Panc1 (cell line): ENCODE measurements at regions of chr11 and their contacts with region 1.

Region 1: GRCh38 chr11:60265373-60266214 is 14.9 kb upstream of the MS4A4A start:
- DNase-seq: peak; percentile 10
- ATAC-seq: 0 out of 2 replicates have a peak, but pooled peaks have one; percentile 60
- H3K4me3 ChIP-seq: no peak overlapping the region
- H3K27ac ChIP-seq: no peak overlapping the region
- H3K4me1 ChIP-seq: no peaks in the 10 kb centered on the region
- H3K27me3 ChIP-seq: no peaks in the 10 kb centered on the region; the same call in 1 of the 2 replicates
- CTCF ChIP-seq: peak; percentile 71

Region 2: GRCh38 chr11:60345489-60345888 is 79.9 kb after region 1 on chr11:
- CTCF ChIA-PET with region 1: no interaction called
- POLR2A ChIA-PET with region 1: no interaction called
- in situ Hi-C with region 1: no loop called
- intact Hi-C with region 1: loop called (anchors 5 kb)
- DNase-seq: no peak
- ATAC-seq: no peak
- H3K4me3 ChIP-seq: no peak overlapping the region
- H3K27ac ChIP-seq: no peak overlapping the region
- H3K4me1 ChIP-seq: no peaks in the 10 kb centered on the region
- H3K27me3 ChIP-seq: peaks cover 2% of the 10 kb centered on the region; the same call in 1 of the 2 replicates
- CTCF ChIP-seq: peak; percentile 71

Region 3: GRCh38 chr11:60756307-60757032 is 490.9 kb after region 1 on chr11 and contains the start of gene MS4A15:
- CTCF ChIA-PET with region 1: no interaction called
- POLR2A ChIA-PET with region 1: no interaction called
- in situ Hi-C with region 1: no loop called
- intact Hi-C with region 1: loop called (anchors 10 kb)
- DNase-seq: no peak
- ATAC-seq: peak; percentile 82
- H3K4me3 ChIP-seq: no peak within 1 kb of the TSS
- H3K27ac ChIP-seq: no peak within 1 kb of the TSS
- H3K4me1 ChIP-seq: no peaks in the 10 kb centered on the region
- H3K27me3 ChIP-seq: peaks cover 15% of the 10 kb centered on the region
- CTCF ChIP-seq: peak; percentile 80
- total RNA-seq, gene MS4A15: not detected